Caco-2 (cell line): ENCODE measurements at regions of chr20 and their contacts with region 1.

Region 1: GRCh38 chr20:53157443-53158408 is 185.6 kb downstream of the TSHZ2 start:
- DNase-seq: peak; percentile 71 to 81
- H3K4me3 ChIP-seq: no peak overlapping the region
- H3K4me3 Mint-ChIP-seq: no peak overlapping the region
- H3K27ac Mint-ChIP-seq: no peak overlapping the region
- H3K4me1 ChIP-seq: no peaks in the 10 kb centered on the region
- H3K4me1 Mint-ChIP-seq: no peaks in the 10 kb centered on the region
- H3K27me3 ChIP-seq: no peaks in the 10 kb centered on the region; the same call in 1 of the 2 replicates
- H3K27me3 Mint-ChIP-seq: no peaks in the 10 kb centered on the region
- CTCF ChIP-seq: peak; percentile 69 to 75

Region 2: DNA sequence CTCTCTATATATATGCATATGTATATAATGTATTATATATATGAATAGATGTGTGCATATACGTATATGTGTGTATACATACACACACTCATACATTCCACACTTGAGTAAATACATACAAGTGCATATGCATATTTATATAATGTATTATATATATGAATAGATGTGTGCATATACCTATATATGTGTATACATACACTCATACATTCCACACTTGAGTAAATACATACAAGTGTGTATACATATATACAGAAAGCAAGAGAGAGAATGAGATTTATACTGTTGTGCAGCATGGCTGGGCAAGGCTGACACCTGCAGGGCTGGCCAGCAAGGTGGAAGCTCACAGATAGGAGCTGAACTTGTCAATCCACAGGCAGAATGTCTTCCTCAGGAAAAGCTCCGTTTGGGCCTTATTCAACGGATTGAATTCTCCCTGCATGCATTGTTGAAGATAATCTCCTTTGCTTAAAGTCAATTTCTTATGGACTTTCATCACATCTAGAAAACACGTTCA is 179.1 kb after region 1 on chr20:
- CTCF ChIA-PET with region 1: no interaction called
- POLR2A ChIA-PET with region 1: no interaction called
- intact Hi-C with region 1: loop called (anchors 1 kb)
- DNase-seq: peak in 1 of 2 experiments; percentile 38
- H3K4me3 ChIP-seq: no peak overlapping the region
- H3K4me3 Mint-ChIP-seq: no peak overlapping the region
- H3K27ac Mint-ChIP-seq: no peak overlapping the region
- H3K4me1 ChIP-seq: peaks cover 3% of the 10 kb centered on the region; the same call in 1 of the 2 replicates
- H3K4me1 Mint-ChIP-seq: peaks cover 10% of the 10 kb centered on the region
- H3K27me3 ChIP-seq: no peaks in the 10 kb centered on the region
- H3K27me3 Mint-ChIP-seq: no peaks in the 10 kb centered on the region
- CTCF ChIP-seq: peak in 1 of 2 experiments; percentile 34